ENCODE measurements at regions of chr10 and their contacts with region 1.

Region 1: GRCh38 chr10:104308439-104308903 is 29.8 kb downstream of the ITPRIP start:
- DNase-seq: no peak
- ATAC-seq: no peak

Region 2: DNA sequence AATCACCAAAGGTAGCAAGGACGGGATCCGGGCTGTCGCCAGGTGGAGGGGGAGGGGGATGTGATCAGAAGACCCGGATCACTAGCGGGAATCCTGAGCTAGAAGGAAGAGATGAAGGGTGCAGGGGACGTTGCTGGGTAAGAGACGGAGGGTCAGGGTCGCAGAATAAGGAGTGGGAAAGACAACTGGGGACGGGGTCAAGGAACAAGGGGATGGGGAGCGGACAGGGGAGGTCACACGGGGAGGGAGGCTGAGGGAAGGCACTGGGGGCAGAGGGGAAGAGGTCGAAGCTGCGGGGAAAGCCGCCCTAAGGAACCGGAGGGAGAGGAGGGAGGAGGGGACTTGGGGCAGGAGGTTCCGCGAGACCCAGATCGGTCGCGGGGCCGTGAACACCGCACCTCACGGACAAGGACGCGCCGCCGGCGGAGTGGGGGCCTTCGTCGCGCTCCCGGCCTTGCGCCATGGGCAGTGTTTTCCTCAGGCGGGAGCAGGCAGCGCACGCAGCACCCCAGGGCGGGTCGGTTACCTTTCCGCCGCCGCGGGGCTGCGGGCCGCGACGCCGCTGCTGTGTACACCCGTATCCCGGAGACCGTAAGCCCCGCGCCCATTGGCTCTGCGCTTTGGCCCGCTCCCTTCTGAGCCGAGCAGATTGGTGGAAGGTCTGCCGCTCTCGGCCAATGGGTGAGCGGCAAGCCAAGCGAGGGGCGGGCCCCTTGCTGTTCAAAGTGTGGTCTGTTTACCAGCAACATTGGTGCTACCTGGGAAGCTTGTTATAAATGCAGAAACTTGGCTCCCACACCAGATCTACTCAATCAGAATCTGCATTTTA is 76.5 kb before region 1 on chr10 and contains the start of gene CFAP43:
- intact Hi-C with region 1: no loop called
- DNase-seq: peak; percentile 99
- ATAC-seq: peak; percentile 100
- total RNA-seq, gene CFAP43: not detected

Region 3: DNA sequence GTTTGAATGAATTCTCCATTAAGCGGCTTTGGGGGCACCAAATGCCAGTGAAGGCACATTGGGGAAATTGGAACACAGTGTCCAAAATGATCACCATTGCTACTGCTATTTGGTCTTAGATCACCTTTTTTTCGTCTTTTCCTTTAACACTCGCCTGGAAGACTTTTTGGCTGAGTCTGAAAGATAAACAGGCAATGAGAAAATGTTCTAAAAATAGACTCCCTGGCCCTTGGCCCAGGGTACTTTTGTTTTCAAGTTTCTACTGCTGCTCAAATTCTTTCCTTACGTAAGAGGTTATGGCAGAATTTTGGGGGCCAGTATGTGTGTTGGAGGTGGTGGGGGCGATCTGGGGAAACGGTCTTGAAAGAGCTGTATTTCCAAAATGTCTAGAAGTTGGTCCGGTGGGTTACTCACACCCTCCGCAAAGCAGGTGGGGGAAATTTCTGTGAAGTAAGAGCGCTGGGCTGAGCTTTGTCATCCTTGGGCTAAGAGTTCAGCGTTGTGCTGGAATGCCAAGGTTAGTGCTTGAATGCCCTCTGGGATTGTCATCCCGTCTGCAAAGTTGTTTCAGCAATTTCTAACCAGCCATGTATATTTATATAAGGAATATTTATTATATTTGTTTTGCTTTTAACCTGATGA is 31.1 kb after region 1 on chr10:
- intact Hi-C with region 1: loop called (anchors 5 kb)
- DNase-seq: no peak
- ATAC-seq: peak; percentile 42

Region 4: DNA sequence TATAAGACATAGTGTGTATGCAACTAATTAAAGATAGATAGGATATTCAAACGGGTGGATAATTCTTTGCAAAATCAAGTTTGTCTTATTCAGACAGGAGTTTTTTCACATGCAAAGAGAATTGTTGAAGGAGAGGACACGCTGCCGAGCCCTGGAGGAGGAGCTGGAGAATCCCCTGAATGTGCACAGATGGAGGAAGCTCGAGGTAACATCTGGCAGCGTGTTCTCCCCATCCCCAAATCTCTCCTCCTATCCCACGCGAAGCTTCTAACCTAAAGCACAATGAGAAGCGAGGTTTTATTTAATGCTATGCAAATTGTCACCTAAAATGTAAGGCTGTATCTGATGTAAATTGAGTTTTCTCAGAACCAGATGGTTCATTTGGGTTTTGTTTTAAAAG is 95.2 kb after region 1 on chr10:
- intact Hi-C with region 1: no loop called
- DNase-seq: no peak
- ATAC-seq: no peak

Region 5: DNA sequence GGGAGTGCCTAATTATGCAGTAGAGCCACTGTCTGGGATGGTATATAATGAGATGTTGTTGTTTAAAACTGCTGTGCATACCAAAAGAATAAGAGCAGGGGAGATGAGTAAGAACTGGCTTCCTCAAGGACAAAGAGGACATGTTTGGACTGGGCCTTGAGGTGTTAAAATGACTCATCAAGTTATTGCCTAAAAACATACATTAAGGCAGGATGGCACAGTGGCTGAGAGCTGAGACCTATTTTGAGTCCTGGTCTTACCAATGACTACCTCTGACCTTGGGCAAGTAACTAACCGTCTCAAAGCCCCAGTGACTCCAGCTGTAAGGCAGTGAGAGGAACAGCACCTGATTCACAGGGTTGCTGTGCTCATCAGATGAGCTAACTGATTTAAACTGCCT is 116.2 kb after region 1 on chr10:
- intact Hi-C with region 1: no loop called
- DNase-seq: no peak
- ATAC-seq: no peak

Measured in left ventricle myocardium superior (tissue), 1 donor.